Posterior vena cava (tissue), 2 donors: ENCODE measurements at regions of chr20 and their contacts with region 1.

Region 1: GRCh38 chr20:34037121-34037520 is 43.4 kb downstream of the RALY start:
- DNase-seq: no peak

Region 2: DNA sequence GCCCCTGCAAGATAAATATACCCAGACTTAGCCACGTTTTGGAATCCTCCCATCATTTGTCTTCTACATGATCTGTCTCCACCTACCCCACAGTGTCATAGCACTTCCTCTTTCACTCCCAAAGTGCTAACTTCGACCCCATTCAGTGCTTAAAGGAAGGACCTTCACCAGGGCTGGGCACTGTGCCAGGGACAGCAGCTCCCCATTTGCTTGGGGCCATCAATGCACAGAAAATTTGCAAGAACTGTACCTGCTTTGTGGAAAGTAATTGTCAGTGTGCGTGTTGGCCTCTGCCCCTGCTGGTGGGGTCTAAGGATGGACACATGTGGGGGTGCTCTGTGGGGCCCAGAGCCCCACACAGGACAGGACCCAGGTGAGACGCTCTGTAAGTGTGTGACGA is 874.4 kb before region 1 on chr20:
- intact Hi-C with region 1: no loop called
- DNase-seq: peak; percentile 48

Region 3: DNA sequence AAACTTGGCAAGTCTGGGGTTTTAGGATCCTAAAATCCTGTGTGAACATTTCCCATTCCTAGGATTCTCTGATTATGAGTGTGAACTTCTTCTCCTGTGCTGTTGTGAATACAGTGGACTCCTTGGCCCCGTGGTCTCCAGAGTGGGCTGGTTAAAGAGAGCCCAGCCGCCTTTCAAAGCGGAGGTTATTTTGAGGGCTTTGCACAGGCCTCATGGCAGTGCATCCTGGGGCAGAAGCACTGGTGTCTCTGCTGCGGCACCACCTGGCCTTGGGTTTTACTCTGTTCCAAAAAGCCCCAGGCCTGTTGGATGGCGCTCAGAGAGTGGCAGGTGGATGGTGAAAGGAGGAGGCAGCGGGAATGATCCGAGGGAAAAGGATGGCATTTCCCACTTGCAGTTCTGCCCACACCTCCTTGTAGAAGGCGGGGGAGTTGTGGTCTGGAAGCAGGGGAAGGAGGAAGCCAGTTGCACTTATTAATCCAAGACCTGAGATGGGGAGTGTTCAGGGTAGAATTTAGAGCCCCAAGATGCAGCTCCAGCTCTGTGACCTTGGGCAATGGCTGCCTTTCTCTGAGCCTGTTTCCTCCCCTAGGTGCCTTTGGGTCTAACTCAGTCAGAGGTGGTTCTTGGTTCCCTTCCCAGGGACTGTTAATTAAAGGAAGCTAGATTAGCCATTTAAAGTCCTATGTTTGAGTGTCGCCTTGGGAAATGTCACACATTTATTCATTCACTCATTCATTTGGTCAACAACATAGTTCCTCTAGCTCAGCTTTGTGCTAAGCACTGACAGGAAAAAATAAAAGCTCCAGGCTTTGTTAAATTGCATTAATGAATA is 1211.7 kb after region 1 on chr20:
- intact Hi-C with region 1: loop called in 1 of 2 experiments (anchors 5 kb)
- DNase-seq: peak; percentile 14

Region 4: DNA sequence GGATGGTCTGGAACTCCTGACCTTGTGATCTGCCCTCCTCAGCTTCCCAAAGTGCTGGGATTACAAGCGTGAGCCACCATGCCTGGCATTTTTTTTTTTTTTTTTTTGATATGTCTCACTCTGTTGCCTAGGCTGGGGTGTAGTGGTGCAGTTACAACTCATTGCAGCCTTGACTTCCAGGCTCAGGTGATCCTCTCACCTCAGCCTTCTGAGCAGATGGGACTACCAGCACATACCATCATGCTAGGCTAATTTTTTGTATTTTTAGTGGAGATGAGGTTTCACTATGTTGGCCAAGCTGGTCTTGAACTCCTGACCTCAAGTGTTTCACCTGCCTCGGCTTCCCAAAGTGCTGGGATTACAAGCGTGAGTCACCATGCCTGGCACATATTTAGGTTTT is 1769.0 kb after region 1 on chr20:
- intact Hi-C with region 1: no loop called
- DNase-seq: peak; percentile 17